Naive thymus-derived CD8-positive, alpha-beta T cell (primary cell): ENCODE measurements at regions of chr9 and their contacts with region 1.

Region 1: DNA sequence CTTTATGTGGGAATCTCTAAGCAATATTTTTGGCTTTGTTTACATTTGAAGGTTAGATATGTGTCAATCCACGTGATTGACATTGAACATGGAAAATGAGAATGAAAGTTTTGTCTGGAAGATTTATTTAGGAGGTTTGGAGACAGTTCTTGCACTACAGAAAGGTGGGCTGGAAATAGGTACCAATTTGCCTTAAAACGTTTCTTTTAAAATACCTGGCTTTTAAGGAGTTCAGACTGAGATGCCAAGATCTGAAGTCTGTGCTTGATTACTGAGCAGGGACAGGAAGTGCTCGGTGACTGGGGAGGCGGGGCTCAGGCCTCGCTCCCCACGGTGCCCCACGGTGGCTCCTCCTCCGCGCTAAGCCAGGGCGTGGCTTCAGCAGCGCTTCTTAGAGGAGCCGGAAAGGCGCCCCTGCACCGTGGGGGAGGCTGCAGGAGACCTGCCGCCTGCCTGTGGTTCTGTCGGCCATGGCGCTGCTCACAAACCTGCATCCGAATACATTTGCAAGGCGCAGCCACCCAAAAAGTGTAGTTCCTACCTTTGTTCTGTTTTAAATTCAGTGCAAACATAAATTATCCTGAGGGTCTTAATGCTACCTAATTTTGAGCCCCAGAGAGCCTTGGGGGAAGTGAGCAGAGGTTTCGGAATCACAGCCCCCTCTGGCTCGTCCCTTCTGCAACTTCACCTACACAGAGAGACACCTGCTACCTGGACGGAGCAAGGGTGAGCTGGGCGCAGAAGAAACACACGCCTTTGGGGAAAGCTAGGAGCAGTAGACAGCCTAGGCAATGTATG is 49.2 kb downstream of the USP20 start:
- DNase-seq: peak; percentile 89 to 97 (median 96)
- ATAC-seq: peak; percentile 48 to 55
- H3K4me3 Mint-ChIP-seq: peak overlapping the region; percentile 86 to 98 (median 93)
- H3K27ac Mint-ChIP-seq: peak overlapping the region; percentile 97 to 100 (median 99)
- H3K4me1 Mint-ChIP-seq: peaks cover 35 to 61% (median 57%) of the 10 kb centered on the region in 4 donors
- H3K27me3 Mint-ChIP-seq: peaks cover 0 to 3% (median 0%) of the 10 kb centered on the region in 5 donors

Region 2: GRCh38 chr9:129726322-129727160 is 157.9 kb before region 1 on chr9:
- POLR2A ChIA-PET with region 1: no interaction called
- DNase-seq: peak in 9 of 10 donors; percentile 26 to 64 (median 57)
- ATAC-seq: peak; percentile 88 to 96
- H3K4me3 Mint-ChIP-seq: peak overlapping the region in 7 of 10 donors; percentile 9 to 59 (median 55)
- H3K27ac Mint-ChIP-seq: no peak overlapping the region
- H3K4me1 Mint-ChIP-seq: peaks cover 2 to 5% (median 2%) of the 10 kb centered on the region in 4 donors
- H3K27me3 Mint-ChIP-seq: peaks cover 5 to 20% (median 7%) of the 10 kb centered on the region in 5 donors

Region 3: DNA sequence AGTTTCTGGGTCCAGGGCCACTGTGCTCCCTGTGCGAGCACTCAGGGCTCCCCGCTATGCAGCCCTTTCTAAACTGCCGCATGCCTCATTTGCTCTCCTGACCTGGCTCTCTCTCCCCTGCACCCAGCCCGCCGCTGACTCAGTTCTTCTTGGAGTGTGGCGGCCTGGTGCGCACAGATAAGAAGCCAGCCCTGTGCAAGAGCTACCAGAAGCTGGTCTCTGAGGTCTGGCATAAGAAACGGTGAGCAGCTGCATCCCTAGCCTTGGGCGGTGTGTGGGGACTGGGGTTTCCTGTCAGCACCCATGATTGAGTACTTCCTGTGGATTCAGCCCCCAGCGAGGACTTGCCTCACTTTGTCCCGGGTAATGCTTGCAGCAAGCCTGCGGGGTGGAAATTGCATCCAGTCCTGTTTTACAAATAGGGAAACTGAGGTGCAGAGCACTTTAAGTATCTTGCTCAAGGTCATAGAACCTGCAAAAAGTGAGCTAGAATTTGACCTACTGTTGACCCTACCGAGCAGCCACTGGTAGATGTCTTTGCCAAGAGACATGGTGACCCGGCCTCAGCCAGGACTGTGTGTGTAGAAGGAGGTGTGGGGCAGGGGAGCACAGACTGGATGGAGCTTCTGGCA is 21.2 kb before region 1 on chr9:
- POLR2A ChIA-PET with region 1: interaction called, 253 read pairs
- DNase-seq: peak in 9 of 10 donors; percentile 51 to 81 (median 58)
- ATAC-seq: peak; percentile 58 to 62
- H3K4me3 Mint-ChIP-seq: peak overlapping the region; percentile 24 to 82 (median 65)
- H3K27ac Mint-ChIP-seq: peak overlapping the region; percentile 86 to 96 (median 90)
- H3K4me1 Mint-ChIP-seq: peaks cover 27 to 77% (median 64%) of the 10 kb centered on the region in 4 donors
- H3K27me3 Mint-ChIP-seq: no peaks in the 10 kb centered on the region

Region 4: DNA sequence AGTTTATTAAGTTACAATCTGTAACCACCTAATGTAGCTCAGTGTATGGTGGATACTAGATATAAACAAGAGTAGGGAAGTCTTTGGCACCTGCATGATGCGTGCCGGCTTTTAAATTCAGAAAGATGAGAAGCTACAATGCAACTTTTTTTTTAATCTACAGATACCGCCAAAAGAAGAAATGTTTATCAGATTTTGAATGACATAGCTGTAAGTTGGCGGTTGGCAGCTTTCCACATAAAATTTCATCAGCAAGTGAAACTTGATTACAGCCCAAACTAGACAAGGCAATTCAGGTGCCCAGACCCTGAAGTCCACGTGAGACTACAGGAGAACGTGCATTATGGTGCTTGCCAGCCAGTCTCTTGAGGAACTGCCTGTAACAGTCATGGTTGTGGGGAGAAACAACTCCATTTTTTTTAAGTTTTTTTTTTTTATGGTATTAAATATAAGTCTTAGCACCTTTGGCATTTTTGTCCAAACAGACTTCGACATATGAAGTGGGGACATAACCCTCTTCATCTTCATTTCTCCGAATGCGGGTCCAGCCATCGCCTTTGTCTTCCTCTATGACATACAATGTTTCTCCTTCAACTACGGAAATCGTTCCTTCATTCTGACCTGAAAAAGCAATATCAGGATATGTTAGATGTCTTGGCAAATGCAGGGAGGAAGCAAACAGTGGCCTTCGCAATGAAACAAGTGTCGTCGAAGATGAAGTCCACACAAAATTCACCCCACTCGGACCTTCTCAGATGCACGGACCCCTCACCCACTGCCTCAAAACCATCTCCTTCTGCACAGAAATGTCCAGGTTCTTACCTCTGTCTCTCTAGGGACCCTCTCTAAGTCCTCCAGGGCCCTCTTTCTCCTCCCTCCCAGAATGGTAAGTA is 11.2 kb after region 1 on chr9:
- POLR2A ChIA-PET with region 1: interaction called, 18 read pairs
- DNase-seq: peak in 8 of 10 donors; percentile 53 to 82 (median 68)
- ATAC-seq: peak; percentile 45 to 59
- H3K4me3 Mint-ChIP-seq: peak overlapping the region in 8 of 10 donors; percentile 4 to 73 (median 58)
- H3K27ac Mint-ChIP-seq: peak overlapping the region; percentile 93 to 100 (median 96)
- H3K4me1 Mint-ChIP-seq: peaks cover 36 to 76% (median 73%) of the 10 kb centered on the region in 4 donors
- H3K27me3 Mint-ChIP-seq: peaks cover 0 to 1% (median 0%) of the 10 kb centered on the region in 5 donors

Region 5: DNA sequence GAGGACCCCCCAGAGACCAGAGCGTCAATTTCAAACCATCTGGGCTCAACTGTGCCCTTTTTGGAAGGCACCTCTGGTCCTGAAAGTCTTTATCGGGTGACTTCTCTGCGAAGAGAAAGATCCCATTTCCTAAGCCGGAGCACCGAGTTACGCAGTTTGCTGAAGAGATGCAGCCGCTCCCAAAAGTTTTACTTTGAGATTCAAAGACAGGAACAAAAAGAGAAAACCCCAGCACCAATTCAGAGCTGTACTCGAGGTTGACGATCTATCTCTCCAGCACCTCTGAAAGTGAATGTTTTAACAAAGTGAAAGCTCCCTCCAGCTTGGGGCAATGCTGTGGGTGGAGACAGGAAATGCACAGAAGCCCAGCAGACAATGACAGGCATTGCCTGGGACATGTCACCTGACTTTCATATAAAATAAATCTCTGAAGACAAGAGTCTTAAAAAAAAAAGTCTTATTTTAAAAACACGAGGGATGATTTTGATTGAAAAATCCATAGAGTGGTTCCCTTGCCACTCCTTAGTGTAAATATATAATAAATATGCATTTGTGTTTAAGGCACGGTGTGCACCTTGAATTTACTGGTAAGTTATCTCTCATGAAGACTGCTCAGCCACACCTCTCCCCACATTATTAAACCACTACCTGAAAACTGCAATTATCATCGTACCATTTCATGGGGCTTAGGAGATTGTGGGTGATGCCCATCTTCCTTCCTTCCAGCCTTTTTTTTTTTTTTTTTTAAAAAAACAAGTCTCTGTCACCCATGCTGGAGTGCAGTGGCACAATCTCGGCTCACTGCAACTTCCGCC is 78.7 kb after region 1 on chr9:
- POLR2A ChIA-PET with region 1: interaction called, 70 read pairs
- DNase-seq: peak; percentile 42 to 88 (median 79)
- ATAC-seq: peak; percentile 96 to 97
- H3K4me3 Mint-ChIP-seq: peak overlapping the region; percentile 85 to 93 (median 88)
- H3K27ac Mint-ChIP-seq: peak overlapping the region; percentile 95 to 99 (median 98)
- H3K4me1 Mint-ChIP-seq: peaks cover 41 to 76% (median 68%) of the 10 kb centered on the region in 4 donors
- H3K27me3 Mint-ChIP-seq: no peaks in the 10 kb centered on the region

Region 6: DNA sequence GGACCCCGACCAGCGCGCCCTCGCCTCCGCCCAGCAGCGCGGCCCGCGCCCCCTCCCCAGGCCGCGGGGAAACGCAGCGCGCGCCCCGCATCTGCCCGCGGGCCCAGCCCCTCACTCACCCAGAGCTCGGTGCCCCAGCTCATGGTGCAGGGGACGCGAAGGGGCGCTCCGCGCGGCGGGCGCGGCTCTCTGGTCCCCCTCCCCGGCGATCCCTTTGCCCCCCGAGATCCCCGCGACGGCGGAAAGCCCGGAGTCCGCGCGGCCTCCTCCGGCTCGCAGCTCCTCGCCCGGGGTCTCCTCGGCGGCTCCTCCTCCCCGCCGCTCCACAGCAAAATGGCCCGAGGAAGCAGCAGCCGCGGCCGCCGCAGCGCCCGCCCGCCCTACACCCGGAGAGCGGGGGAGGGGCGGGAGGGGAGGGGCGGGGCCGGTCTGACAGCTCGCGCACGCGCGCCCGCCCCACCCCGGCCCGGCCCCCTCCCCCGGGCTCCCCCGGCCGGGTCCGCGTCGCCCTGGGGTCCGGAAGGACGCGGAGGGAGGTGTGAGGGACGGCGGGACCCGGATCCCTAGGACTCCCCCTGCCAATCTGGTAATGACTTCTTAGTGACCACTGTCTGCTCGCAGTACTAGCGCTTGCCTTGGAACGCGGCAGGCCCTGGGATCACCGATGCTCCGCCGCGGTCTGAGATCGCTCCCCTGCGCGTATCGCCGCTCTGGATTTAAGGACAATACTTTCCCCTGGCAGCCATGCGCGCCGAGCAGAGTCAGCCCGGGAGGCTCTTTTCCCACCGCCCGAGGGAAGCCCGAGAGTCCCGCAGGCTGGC is 158.6 kb after region 1 on chr9 and contains the start of gene FNBP1:
- POLR2A ChIA-PET with region 1: interaction called, 225 read pairs
- DNase-seq: peak; percentile 67 to 89 (median 80)
- ATAC-seq: peak; percentile 67 to 73
- H3K4me3 Mint-ChIP-seq: peak within 1 kb of the TSS; percentile 97 to 100 (median 99)
- H3K27ac Mint-ChIP-seq: peak within 1 kb of the TSS; percentile 95 to 99 (median 98)
- H3K4me1 Mint-ChIP-seq: peaks cover 32 to 65% (median 49%) of the 10 kb centered on the region in 4 donors
- H3K27me3 Mint-ChIP-seq: no peaks in the 10 kb centered on the region
- polyA plus RNA-seq, gene FNBP1: 130 to 143 (median 136) TPM